ENCODE measurements at regions of chr1 and their contacts with region 1.

Region 1: DNA sequence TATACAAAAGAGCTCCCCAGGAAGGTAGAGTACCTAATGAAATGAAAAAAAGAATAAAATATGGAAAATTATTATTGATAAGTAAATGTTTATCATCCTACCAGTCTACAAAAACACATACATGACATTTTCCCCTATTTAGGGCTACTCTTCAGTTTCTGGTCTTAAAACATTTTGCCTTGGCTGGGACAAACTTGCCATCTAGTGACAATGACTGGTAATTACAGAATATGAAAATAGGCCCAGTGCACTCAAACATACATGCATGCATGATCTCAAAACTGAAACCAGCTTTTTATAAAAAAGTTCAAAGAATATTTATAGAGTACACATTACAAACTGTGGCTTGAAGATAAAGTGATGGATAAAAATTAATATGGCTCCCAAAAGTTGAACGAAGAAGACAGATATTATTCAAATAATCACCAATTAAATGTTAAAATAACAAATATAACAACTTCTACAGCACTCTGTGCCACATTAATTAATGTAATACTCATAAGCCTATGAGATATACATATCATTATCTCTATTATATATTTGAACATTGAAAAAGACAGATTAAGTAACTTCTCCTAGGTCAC is 10.5 kb upstream of the RNPC3 start:
- DNase-seq: no peak
- ATAC-seq: peak; percentile 68

Region 2: DNA sequence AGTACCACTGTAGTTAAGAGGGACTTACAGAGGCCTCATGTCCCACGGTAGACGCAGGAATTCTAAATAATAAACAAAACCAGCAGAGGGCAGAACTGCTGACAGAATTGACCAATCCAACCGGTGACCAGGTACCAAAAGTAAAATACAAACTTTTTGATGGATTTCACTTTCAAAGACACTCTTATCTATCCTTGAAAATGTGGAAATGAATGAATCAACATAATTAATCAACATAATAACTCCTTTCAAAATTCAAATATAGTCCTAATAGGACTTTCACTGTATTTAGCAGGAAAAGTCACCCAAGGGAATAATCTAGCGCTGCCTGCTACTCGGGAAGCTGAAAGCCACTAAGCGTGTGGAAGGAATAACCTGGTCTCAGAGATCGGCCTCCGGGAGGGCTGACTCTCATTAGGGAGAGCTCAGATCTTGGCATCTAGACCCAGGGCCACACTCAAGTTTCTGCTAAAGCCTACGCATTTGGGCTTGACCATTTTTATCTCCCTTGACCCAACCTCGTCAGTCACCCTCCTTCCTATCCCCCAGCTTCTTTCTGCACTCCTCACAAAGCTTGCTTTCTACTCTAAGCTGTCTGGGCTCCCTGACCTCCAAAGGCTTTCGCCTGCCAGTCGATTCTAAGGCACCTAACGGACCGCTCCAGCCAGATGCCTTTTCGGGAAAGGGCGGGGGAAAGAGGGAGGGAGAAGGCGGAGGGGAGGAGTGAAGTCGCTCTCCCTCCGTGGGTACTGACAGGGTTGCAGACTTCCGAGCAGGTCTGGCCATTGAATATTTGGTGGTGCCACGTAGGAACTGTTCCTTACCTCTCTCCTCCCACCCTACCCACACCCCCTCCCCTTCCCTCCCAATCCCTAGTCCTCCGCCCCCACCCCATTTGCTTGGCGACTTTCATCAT is 408.3 kb before region 1 on chr1:
- intact Hi-C with region 1: loop called (anchors 5 kb)
- DNase-seq: no peak
- ATAC-seq: peak; percentile 78

Region 3: DNA sequence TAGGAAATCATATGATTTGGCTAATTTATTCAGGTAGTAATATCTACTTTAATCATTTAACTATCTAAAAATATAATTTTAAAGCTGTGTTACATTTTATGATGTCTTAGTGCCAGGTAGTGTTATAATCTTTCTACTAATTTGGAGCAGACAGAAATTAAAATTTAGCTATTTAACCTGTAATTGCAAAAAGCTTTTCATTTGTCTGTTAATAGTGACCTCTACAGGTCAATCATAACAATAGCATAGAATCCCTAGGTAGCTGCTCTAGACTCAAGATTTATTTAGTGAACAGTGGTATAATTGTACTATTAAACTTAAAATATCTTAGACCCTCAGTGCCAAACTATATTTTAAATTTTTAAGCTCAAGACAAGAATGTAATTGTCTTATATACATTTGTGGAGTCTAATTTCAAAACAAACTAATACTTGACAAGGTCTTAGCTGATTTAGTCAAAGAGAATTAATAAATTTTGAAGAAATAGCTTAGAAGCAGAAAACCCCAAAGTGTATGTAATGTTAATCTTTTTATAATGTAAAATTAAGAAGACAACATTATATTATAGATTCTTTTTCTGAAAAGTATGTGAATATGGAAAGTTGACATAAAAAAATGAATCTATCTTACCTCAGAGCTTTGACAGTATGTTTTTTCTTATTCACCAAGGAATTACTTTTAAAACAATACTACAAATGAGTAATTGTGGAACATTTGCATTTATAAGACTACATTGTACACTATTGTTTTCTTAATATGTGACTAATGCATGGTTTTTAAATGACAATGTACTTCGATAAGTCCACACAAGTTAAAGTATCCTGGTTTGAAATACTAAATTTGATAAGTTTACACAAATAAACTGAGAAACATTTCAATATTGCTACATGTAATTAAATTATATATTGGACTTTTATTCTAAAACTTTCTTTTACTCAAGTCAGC is 53.6 kb before region 1 on chr1:
- intact Hi-C with region 1: no loop called
- DNase-seq: no peak
- ATAC-seq: no peak

Region 4: DNA sequence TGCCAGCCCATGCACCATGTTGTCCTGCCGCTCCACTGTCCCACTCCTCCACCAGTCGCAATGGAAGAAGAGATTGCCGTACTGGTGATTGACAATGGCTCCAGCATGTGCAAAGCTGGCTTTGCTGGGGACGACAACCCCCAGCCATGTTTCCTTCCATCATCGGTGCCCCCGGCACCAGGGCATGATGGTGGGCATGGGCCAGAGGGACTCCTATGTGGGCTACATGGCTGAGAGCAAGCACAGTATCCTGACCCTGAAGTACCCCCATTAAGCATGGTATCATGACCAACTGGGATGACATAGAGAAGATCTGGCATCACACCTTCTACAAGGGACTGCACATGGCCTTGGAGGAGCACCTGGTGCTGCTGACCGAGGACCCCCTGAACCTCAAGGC is 54.5 kb after region 1 on chr1:
- intact Hi-C with region 1: no loop called
- DNase-seq: no peak
- ATAC-seq: no peak

Region 5: GRCh38 chr1:103937763-103938357 is 422.8 kb after region 1 on chr1:
- intact Hi-C with region 1: no loop called
- DNase-seq: no peak
- ATAC-seq: no peak